Calu3 (cell line): ENCODE measurements at regions of chr14 and their contacts with region 1.

Region 1: DNA sequence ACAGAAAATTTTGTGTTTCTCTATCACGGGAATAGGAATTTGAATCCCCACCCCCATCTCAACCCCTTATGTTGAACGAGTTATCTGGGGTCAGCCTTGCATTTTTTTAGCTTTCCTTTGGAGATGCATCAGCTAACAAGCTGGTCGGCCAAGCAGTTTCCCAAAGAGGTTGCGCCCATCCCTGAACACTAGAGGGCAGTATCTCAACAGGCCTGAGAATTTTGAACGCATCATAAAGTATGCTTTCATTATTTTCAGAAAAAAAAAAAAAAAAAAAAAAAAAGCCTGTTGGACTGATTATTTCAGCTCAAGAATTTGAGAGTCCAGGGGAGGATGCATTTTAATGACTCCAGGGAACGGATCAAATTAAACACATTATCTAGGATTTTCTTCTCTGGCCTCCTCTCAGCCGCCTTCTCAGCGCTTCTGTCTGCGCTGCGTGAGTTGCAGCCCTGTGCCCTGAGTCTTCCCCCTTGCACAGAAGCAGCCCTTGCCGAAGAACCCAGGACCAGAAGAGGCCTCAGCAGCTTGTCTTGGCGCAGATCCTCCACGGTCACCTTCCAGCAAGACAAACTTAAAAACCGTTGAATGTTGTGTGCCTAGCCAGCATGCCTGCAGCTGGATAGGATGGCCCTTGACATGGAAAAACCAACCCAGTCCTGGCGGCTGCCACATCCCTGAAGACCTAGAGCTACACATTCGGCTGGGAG is 76.6 kb upstream of the GZMB start:
- DNase-seq: peak; percentile 58
- H3K4me3 Mint-ChIP-seq: no peak overlapping the region
- H3K27ac Mint-ChIP-seq: no peak overlapping the region
- H3K4me1 Mint-ChIP-seq: no peaks in the 10 kb centered on the region
- H3K27me3 Mint-ChIP-seq: peaks cover 23% of the 10 kb centered on the region
- CTCF ChIP-seq: peak; percentile 42

Region 2: DNA sequence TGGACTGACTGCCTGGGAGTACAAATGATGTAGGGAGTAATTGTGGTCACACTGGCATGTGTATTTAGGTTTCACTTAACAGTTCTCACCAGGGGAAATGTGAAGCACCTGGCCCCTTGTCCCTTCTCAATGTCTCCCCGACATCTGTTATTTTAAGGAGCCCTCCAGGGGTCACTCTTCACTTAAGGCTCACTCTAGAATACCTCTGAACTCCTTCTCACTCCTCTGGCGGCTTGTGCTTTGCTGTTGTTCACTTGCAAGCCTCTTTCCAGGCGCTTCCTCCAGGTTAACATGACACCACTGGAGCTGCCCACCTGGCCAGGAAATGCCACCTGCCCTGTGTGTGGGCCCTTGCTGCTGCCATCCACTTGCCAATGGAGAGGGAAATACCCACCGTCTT is 20.1 kb before region 1 on chr14:
- CTCF ChIA-PET with region 1: no interaction called
- intact Hi-C with region 1: no loop called
- DNase-seq: peak; percentile 6
- H3K4me3 Mint-ChIP-seq: no peak overlapping the region
- H3K27ac Mint-ChIP-seq: no peak overlapping the region
- H3K4me1 Mint-ChIP-seq: no peaks in the 10 kb centered on the region
- H3K27me3 Mint-ChIP-seq: peaks cover 51% of the 10 kb centered on the region
- CTCF ChIP-seq: no peak

Region 3: DNA sequence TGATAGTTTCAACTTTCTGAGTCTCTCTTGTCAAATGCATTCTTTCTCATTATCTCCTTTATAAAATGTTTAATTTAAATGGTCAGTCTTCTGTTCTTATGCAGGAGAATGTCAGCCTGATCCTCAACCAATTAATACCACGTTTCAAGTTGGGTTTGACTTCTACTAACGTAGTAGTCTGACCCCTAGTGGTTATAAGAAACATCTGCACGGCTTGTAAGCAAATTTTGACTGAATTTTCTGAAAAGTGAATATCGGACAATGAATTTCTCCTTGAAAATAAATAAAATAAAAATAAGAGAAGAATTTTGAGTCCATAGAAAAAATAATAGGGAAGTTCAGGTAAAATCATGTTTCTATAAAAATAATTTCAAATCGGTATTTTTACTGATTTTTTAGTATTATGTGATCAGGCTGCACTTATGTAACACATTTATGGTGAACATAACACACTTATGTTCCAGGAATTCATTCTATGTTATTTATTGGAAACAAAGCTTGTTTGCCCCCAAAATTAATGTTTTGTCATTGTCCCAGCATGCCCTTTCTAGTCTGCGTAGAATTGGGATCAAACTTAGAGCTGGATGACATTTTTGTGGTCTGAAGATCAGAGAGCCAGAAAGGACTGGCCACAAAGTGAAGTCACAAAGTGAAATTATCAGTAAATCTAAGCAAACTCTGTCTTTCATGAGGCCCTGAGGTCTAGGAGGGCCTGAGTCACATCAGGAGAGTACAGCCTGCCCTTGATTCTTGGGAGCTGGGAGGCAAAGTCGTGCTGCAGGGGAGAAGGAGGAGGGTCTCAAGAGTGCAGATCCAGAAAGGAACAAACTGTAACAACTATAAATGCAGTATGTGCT is 440.6 kb after region 1 on chr14:
- CTCF ChIA-PET with region 1: interaction called, 14 read pairs
- intact Hi-C with region 1: loop called (anchors 2 kb)
- DNase-seq: no peak
- H3K4me3 Mint-ChIP-seq: no peak overlapping the region
- H3K27ac Mint-ChIP-seq: no peak overlapping the region
- H3K4me1 Mint-ChIP-seq: peaks cover 5% of the 10 kb centered on the region
- H3K27me3 Mint-ChIP-seq: peaks cover 18% of the 10 kb centered on the region
- CTCF ChIP-seq: peak; percentile 21

Region 4: DNA sequence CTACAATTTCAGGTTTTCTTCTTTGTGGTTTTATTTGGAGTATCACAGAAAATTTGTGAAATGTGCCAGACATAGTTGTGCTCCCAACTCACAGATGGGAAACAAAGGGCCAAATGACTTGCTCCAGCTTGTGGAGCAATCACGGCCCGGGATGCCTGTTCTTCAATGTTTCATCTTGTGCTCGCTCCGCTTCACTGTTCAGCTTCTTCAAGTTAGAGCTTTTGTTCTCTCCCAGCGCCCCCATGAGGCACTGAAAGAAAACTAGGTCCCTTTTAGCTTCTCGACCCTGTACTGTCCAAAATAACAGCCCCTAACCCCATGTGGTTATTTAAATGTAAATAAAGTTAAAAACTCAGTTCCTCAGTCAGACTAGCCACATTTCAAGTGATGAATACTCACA is 527.3 kb after region 1 on chr14:
- CTCF ChIA-PET with region 1: no interaction called
- intact Hi-C with region 1: loop called (anchors 2 kb)
- DNase-seq: peak; percentile 18
- H3K4me3 Mint-ChIP-seq: no peak overlapping the region
- H3K27ac Mint-ChIP-seq: no peak overlapping the region
- H3K4me1 Mint-ChIP-seq: peaks cover 9% of the 10 kb centered on the region
- H3K27me3 Mint-ChIP-seq: no peaks in the 10 kb centered on the region
- CTCF ChIP-seq: no peak

Region 5: GRCh38 chr14:25389948-25390347 is 679.4 kb after region 1 on chr14:
- CTCF ChIA-PET with region 1: no interaction called
- intact Hi-C with region 1: no loop called
- DNase-seq: no peak
- H3K4me3 Mint-ChIP-seq: no peak overlapping the region
- H3K27ac Mint-ChIP-seq: no peak overlapping the region
- H3K4me1 Mint-ChIP-seq: no peaks in the 10 kb centered on the region
- H3K27me3 Mint-ChIP-seq: no peaks in the 10 kb centered on the region
- CTCF ChIP-seq: no peak

Region 6: GRCh38 chr14:25400607-25401206 is 690.1 kb after region 1 on chr14:
- CTCF ChIA-PET with region 1: interaction called, 12 read pairs
- intact Hi-C with region 1: loop called (anchors 1 kb)
- DNase-seq: peak; percentile 40
- H3K4me3 Mint-ChIP-seq: no peak overlapping the region
- H3K27ac Mint-ChIP-seq: no peak overlapping the region
- H3K4me1 Mint-ChIP-seq: no peaks in the 10 kb centered on the region
- H3K27me3 Mint-ChIP-seq: no peaks in the 10 kb centered on the region
- CTCF ChIP-seq: peak; percentile 50